H1 (cell line): ENCODE measurements at regions of chr19 and their contacts with region 1.

Region 1: DNA sequence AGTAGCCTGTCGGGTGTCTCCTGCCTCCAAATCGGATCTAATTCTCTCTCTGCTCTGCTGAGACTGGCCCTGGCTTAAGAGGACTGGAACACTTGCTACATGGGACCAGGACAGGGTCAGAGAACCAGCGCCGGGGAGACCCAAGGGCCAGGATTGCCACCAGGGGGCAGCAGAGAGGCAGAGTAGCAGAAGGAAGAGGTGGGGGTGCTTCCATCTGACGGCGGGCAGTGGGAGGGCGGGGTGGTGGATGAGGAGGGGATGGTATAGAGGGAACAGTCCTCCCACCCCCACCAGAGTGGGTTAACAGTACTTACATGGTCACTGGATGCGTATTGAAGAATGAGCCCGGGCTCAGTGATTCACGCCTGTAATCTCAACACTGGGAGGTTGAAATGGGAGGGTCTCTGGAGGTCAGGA is 11.9 kb downstream of the SELENOW start:
- DNase-seq: peak; percentile 94 to 100
- H3K4me3 ChIP-seq: peak overlapping the region in 1 of 4 experiments; percentile 22; a peak in 1 of 8 replicates
- H3K27ac ChIP-seq: no peak overlapping the region
- H3K4me1 ChIP-seq: no peaks in the 10 kb centered on the region; a peak in 3 of 7 replicates
- H3K27me3 ChIP-seq: no peaks in the 10 kb centered on the region
- CTCF ChIP-seq: peak; percentile 94 to 97 (median 95)
- EP300 ChIP-seq: 0 out of 3 replicates have a peak, but pooled peaks of 1 of the 2 experiments have one; percentile 59
- POLR2A ChIP-seq: 0 out of 3 replicates have a peak, but pooled peaks of 1 of the 2 experiments have one; percentile 26
- RAD21 ChIP-seq: peak; percentile 58 to 74

Region 2: DNA sequence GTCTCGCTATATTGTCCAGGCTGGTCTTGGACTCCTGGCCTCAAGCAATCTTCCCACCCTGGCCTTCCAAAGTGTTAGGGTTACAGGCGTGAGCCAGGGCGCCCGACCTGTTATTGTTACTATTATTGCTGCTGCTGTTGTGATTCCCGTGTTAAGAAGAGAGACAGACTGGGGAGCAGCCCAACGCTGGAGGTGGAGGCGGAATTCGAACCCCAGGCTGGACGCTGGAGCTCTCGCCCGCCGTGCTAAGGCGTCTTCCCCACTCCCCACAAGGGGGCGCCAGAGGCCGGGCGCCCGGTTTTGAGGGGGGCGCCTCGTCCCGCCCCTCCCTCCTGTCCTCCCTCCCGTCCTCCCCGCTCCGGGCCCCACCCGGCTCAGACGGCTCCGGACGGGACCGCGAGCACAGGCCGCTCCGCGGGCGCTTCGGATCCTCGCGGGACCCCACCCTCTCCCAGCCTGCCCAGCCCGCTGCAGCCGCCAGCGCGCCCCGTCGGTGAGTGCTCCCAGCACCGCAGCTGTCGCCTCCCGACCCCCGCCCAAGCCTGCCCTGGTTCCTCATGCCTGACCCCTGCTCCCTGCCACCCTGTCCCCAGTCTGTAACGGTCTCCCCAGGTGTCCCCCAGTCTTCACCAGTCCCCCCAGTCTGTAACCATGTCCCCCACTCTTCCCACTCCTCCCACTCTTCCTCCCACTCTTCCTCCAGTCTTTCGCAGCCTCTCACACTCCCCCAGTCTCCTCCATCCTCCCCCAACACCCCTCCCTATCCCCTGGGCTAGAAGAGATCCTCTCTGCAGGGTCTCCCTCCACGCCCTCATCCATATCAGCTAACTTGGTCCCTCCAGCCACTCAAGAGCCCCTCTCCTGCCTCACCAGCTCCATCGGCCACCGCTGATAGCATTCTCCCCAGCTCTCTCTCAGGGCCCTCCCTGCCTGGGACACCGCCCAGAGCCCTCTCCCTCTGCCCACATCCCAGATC is 77.1 kb before region 1 on chr19 and contains the start of gene EHD2:
- CTCF ChIA-PET with region 1: interaction called, 72 read pairs
- POLR2A ChIA-PET with region 1: no interaction called
- DNase-seq: peak in 1 of 2 experiments; percentile 89
- H3K4me3 ChIP-seq: peak within 1 kb of the TSS; percentile 47 to 66 (median 56)
- H3K27ac ChIP-seq: no peak within 1 kb of the TSS
- H3K4me1 ChIP-seq: no peaks in the 10 kb centered on the region
- H3K27me3 ChIP-seq: no peaks in the 10 kb centered on the region
- CTCF ChIP-seq: peak; percentile 74 to 84 (median 81)
- EP300 ChIP-seq: no peak
- POLR2A ChIP-seq: no peak
- RAD21 ChIP-seq: peak; percentile 77 to 81
- total RNA-seq, gene EHD2: 13.0 and 14.3 TPM in 2 replicates

Region 3: DNA sequence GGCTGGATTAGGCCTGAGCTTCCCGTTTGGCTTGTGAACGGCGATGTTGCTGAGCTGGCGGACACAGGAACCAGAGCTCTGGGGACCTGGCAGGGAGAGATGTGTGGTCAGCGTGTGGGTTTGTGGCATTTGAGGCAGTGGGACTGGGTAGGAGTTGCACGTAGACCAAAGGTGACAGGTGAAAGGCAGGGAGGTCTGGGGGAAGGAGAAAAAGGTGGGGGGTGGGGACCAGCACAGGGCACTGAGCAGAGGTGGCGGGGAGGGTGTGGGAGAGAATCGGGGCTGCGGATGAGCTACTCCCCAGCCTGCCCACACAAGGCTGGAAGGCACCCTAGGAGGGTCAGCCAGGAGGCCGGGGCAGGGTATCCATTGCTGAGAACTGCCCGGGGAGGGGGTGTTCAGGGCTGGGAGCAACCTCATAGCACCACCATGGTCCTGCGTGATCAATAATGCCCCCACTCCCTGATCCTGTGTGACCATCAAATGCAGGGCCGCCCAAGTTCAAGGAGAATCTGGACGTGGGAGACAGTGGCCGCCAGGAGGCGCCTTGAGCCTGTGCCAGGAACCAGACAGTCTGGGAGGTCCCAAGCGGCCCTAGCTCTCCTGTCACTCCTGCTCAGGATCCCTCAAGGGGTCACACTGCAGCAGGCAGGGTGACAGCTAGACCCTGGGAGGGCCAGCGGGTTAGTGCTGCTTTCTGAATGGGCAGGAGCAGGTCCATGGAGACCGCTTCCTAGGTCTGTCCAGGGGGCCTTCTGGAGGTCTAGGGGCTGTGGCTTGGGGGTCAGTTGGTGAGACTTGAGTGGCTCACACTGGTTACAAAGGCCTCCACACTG is 24.7 kb before region 1 on chr19:
- CTCF ChIA-PET with region 1: interaction called, 150 read pairs
- POLR2A ChIA-PET with region 1: interaction called, 46 read pairs
- DNase-seq: peak in 1 of 2 experiments; percentile 93
- H3K4me3 ChIP-seq: no peak overlapping the region
- H3K27ac ChIP-seq: no peak overlapping the region; the same call in 1 of the 2 replicates
- H3K4me1 ChIP-seq: peaks cover 0 to 6% (median 3%) of the 10 kb centered on the region in 4 experiments; a peak in 5 of 7 replicates
- H3K27me3 ChIP-seq: no peaks in the 10 kb centered on the region
- CTCF ChIP-seq: peak; percentile 85 to 95 (median 94)
- EP300 ChIP-seq: no peak
- POLR2A ChIP-seq: no peak
- RAD21 ChIP-seq: peak; percentile 91 to 93

Region 4: GRCh38 chr19:47805313-47805712 is 14.9 kb after region 1 on chr19:
- CTCF ChIA-PET with region 1: interaction called, 10 read pairs
- POLR2A ChIA-PET with region 1: interaction called, 3 read pairs
- DNase-seq: no peak
- H3K4me3 ChIP-seq: no peak overlapping the region
- H3K27ac ChIP-seq: no peak overlapping the region
- H3K4me1 ChIP-seq: no peaks in the 10 kb centered on the region
- H3K27me3 ChIP-seq: no peaks in the 10 kb centered on the region
- CTCF ChIP-seq: no peak
- EP300 ChIP-seq: no peak
- POLR2A ChIP-seq: no peak
- RAD21 ChIP-seq: no peak

Region 5: GRCh38 chr19:47848823-47849473 is 58.5 kb after region 1 on chr19:
- CTCF ChIA-PET with region 1: interaction called, 5 read pairs
- POLR2A ChIA-PET with region 1: interaction called, 12 read pairs
- DNase-seq: peak; percentile 62 to 91
- H3K4me3 ChIP-seq: peak overlapping the region; percentile 26 to 52 (median 34); a peak in 7 of 8 replicates
- H3K27ac ChIP-seq: peak overlapping the region; percentile 83
- H3K4me1 ChIP-seq: peaks cover 5 to 12% (median 6%) of the 10 kb centered on the region in 4 experiments; a peak in 5 of 7 replicates
- H3K27me3 ChIP-seq: no peaks in the 10 kb centered on the region
- CTCF ChIP-seq: peak; percentile 60 to 63 (median 61); a peak in 3 of 4 replicates
- EP300 ChIP-seq: no peak
- POLR2A ChIP-seq: peak in 1 of 2 experiments; percentile 17; a peak in 1 of 3 replicates
- RAD21 ChIP-seq: peak in 1 of 2 experiments; percentile 42; a peak in 3 of 4 replicates